ENCODE measurements at regions of chr17 and their contacts with region 1.

Region 1: DNA sequence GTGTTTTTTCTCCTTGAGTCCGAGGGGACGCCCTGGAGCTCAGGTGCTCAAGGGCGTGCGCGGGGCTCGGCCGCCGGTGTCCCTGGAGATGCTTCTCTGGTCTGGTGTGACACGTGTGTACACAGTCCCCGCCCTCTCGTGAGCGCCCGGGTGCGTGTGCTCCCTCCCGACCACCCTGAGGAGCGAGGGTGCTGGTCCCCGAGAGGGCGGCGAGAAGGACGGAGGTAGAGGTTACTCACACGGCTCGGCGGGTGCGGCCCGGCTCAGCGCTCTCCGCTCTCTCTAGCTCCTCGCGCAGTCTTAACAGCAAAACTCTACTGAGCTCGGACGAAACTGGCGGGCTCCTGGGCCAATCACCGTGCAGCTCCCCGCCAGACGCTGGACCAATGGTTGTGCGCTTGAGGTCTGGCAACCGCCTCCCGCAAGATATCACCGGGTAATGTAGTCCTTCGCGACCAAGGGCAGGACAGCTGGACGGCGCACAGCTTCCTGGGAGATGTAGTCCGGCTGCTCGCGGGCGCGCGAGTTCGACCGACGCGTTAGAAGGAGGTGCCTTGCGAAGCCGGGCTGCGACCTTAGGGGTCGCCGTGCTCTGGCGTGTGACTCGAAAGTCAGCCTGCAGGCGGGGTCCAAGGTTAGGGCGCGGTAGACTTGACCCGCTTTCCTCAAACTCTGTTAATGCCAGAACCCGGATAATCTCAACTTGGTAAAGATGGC is at the start of gene SLC25A19:
- DNase-seq: peak; percentile 100
- ATAC-seq: peak; percentile 97 to 99
- H3K4me3 ChIP-seq: peak within 1 kb of the TSS; percentile 72
- H3K27ac ChIP-seq: peak within 1 kb of the TSS; percentile 86 to 90
- H3K4me1 ChIP-seq: peaks cover 12% of the 10 kb centered on the region
- CTCF ChIP-seq: no peak
- EP300 ChIP-seq: no peak
- POLR2A ChIP-seq: peak; percentile 95
- RAD21 ChIP-seq: peak; percentile 15 to 22; a peak in 2 of 5 replicates
- polyA plus RNA-seq, gene SLC25A19: 14.8 and 15.3 TPM in 2 replicates

Region 2: GRCh38 chr17:75228305-75228704 is 61.0 kb before region 1 on chr17:
- CTCF ChIA-PET with region 1: no interaction called
- POLR2A ChIA-PET with region 1: no interaction called
- DNase-seq: no peak
- ATAC-seq: no peak
- H3K4me3 ChIP-seq: no peak overlapping the region
- H3K27ac ChIP-seq: no peak overlapping the region
- H3K4me1 ChIP-seq: no peaks in the 10 kb centered on the region
- CTCF ChIP-seq: no peak
- EP300 ChIP-seq: no peak
- POLR2A ChIP-seq: no peak
- RAD21 ChIP-seq: no peak

Region 3: DNA sequence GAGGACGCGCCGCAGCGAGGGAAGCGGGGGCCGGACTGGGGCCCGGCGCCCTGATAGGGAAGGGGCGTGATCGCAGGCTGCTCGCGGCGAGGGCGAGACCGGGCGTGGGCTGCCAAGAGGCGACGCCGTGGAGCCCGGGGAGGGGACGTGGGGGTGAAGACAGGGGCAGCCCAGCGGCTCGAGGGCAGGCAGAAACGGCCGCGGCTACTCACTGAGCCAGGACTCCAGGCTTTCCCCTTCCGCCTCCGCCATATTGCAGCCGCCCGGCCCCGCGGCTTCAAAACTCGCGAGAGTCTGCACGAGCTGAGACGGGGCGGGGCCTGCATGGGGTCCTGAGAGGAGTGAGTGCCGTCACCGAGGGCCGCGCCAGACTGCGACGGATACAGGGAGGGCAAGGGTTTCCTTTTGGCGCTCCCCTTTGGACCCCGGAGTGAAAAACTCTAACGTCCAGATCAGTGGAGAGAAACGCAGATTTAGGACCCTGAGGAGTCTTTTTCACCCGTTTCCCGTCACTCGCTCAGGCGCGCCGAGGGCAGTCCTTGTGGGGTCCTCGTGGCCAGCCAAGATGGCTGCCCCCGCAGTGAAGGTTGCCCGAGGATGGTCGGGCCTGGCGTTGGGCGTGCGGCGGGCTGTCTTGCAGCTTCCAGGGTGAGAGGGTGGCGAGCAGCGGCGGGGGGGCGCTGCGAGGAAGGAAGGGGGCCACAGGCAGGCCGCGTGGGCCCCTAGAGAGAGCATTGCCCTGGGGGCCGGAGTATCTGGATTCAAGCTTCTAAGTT is 27.7 kb before region 1 on chr17 and contains the starts of genes GGA3 and MRPS7:
- CTCF ChIA-PET with region 1: interaction called, 110 read pairs
- POLR2A ChIA-PET with region 1: interaction called, 25 read pairs
- DNase-seq: peak; percentile 95 to 96
- ATAC-seq: peak; percentile 96 to 97
- H3K4me3 ChIP-seq: peak within 1 kb of the TSS; percentile 97
- H3K27ac ChIP-seq: peak within 1 kb of the TSS; percentile 96
- H3K4me1 ChIP-seq: peaks cover 22% of the 10 kb centered on the region
- CTCF ChIP-seq: no peak
- EP300 ChIP-seq: no peak
- POLR2A ChIP-seq: peak; percentile 91
- RAD21 ChIP-seq: no peak
- polyA plus RNA-seq, gene GGA3: 40.9 and 43.6 TPM in 2 replicates
- polyA plus RNA-seq, gene MRPS7: 144 and 157 TPM in 2 replicates

Region 4: GRCh38 chr17:75277664-75278071 is 11.6 kb before region 1 on chr17:
- CTCF ChIA-PET with region 1: interaction called, 110 read pairs
- POLR2A ChIA-PET with region 1: interaction called, 34 read pairs
- DNase-seq: no peak
- ATAC-seq: 0 out of 6 replicates have a peak, but pooled peaks of 1 of the 2 experiments have one; percentile 17
- H3K4me3 ChIP-seq: no peak overlapping the region
- H3K27ac ChIP-seq: 0 out of 6 replicates have a peak overlapping the region, but pooled peaks of 1 of the 2 experiments have one; percentile 2
- H3K4me1 ChIP-seq: peaks cover 15% of the 10 kb centered on the region
- CTCF ChIP-seq: no peak
- EP300 ChIP-seq: no peak
- POLR2A ChIP-seq: no peak
- RAD21 ChIP-seq: no peak

Region 5: DNA sequence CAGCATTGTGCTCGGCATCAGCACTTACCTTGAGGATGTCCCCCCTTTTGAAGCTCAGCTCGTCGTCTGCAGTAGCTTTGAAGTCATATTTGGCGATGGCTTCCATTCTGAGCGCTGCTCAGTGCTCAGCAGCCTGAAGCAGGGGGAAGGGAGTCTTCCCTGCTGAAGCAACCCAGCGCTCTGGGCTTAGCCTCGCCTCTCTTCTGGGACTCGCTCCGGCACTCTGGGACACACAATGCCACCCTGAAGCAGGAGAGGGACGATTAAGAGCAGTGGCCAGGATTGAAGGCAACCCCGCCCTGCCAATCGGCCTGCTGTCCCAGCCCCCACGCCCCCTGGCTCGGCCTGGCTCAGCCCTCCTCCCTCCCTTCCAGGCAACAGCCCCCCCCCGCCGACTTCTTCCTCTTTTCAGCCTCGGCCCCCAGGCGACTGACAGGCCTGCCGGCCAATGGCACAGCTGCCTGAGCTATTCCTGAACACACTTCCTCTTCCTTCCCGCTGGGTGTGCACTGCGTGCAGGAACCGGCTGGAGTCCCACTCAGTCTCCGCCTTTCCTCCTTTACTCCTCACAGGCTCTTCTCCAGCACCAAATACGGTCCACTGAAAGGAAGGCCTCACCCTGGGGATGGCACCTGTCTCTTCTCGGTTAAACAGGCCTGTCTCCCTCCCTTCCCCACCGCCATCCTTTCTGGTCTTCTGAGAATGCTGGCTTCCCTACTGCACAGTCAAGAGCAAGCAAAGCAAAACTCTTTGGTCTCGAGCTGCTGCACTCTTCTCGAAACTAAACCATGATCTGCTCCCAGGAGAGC is 104.5 kb after region 1 on chr17:
- CTCF ChIA-PET with region 1: interaction called, 4 read pairs
- POLR2A ChIA-PET with region 1: interaction called, 18 read pairs
- DNase-seq: peak; percentile 98 to 99
- ATAC-seq: peak; percentile 99 to 100
- H3K4me3 ChIP-seq: peak overlapping the region; percentile 62
- H3K27ac ChIP-seq: peak overlapping the region; percentile 80 to 88
- H3K4me1 ChIP-seq: peaks cover 30% of the 10 kb centered on the region
- CTCF ChIP-seq: no peak
- EP300 ChIP-seq: no peak
- POLR2A ChIP-seq: peak; percentile 79
- RAD21 ChIP-seq: 0 out of 5 replicates have a peak, but pooled peaks of 1 of the 2 experiments have one; percentile 17

Region 6: GRCh38 chr17:75405365-75406221 is 116.3 kb after region 1 on chr17 and contains the start of gene GRB2:
- CTCF ChIA-PET with region 1: interaction called, 14 read pairs
- POLR2A ChIA-PET with region 1: interaction called, 27 read pairs
- DNase-seq: peak; percentile 97 to 99
- ATAC-seq: peak; percentile 82 to 92
- H3K4me3 ChIP-seq: peak within 1 kb of the TSS; percentile 96
- H3K27ac ChIP-seq: peak within 1 kb of the TSS; percentile 91 to 95
- H3K4me1 ChIP-seq: peaks cover 13% of the 10 kb centered on the region; the same call in 1 of the 3 replicates
- CTCF ChIP-seq: no peak
- EP300 ChIP-seq: no peak
- POLR2A ChIP-seq: peak; percentile 93
- RAD21 ChIP-seq: no peak
- polyA plus RNA-seq, gene GRB2: 87.5 and 91.4 TPM in 2 replicates

Region 7: DNA sequence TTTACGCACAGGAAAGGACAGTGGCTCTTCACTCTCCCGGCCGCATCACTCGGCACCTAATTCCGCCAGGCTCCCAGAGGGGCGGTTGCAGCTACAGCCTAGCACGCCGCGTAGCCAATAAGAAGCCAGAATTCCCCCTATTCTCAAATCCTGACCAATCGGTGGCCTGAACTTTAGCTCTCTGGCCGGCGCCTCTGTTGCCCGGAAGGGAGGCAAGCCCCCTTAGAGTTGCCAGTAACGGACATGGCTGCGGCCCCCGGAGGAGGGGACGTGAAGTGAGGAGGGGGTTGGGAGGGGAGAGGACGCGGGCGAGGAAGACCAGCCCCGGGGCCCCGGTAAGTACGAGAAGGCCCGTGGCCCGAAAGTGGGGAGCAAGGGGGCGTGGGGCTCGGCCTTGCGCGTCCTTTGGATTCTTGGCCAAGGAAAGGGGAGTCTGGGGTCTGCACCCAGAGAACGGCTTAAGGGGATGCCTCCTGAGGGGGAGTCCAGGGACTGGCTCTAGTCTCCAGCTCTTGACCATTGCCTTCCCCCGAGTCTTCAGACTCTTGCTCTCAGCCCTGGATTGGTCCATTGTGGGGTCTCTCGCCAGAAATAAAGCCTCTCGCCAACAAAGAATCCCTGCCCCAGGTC is 167.3 kb after region 1 on chr17 and contains the start of gene TMEM94:
- CTCF ChIA-PET with region 1: no interaction called
- POLR2A ChIA-PET with region 1: interaction called, 10 read pairs
- DNase-seq: peak; percentile 96 to 99
- ATAC-seq: peak; percentile 98 to 99
- H3K4me3 ChIP-seq: peak within 1 kb of the TSS; percentile 91
- H3K27ac ChIP-seq: peak within 1 kb of the TSS; percentile 92 to 95
- H3K4me1 ChIP-seq: peaks cover 23% of the 10 kb centered on the region
- CTCF ChIP-seq: no peak
- EP300 ChIP-seq: no peak
- POLR2A ChIP-seq: peak; percentile 55
- RAD21 ChIP-seq: no peak
- polyA plus RNA-seq, gene TMEM94: 30.5 and 42.7 TPM in 2 replicates